ENCODE measurements at regions of chr3 and their contacts with region 1.

Region 1: DNA sequence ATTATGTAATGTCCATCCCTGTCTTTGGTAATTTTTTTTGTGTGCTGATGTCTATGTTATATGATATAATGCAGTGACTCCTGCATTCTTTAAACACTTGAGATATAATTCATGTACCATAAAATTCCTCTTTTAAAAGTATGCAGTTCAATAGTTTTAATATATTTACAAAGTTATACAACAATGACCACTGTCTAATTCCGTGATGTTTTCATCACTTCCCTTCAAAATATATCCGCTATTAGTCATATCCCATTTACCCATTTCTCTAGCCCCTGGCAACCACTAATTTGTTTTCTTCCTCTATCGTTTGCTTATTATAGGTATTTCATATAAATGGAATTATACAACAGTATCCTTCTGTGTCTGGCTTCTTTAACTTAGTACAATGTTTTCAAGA is 64.9 kb upstream of the SUCLG2 start:
- DNase-seq: no peak
- ATAC-seq: no peak
- H3K4me3 ChIP-seq: no peak overlapping the region
- H3K4me3 Mint-ChIP-seq: no peak overlapping the region
- H3K27ac ChIP-seq: no peak overlapping the region
- H3K27ac Mint-ChIP-seq: no peak overlapping the region
- H3K4me1 ChIP-seq: no peaks in the 10 kb centered on the region
- H3K4me1 Mint-ChIP-seq: peaks cover 4% of the 10 kb centered on the region
- H3K27me3 ChIP-seq: no peaks in the 10 kb centered on the region
- H3K27me3 Mint-ChIP-seq: no peaks in the 10 kb centered on the region
- CTCF ChIP-seq: no peak

Region 2: DNA sequence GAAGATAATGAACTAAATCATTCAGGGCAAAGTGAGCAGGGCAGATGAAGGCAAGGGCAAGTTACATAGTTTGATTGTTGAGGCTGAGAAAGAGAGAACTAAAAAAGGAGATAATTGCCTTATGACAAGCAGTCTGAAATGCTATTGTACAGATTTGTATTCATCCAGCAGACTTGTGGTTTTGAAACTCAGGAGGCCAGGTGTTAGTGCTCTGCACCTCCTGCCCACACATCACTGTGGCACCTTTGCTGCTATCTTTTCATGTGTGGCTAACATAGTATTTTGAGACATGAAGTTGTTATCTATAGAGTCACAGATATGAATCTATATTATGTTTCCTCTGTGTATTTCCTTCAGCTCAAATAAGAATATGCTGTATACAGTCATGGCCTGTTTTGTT is 40.7 kb before region 1 on chr3:
- CTCF ChIA-PET with region 1: no interaction called
- POLR2A ChIA-PET with region 1: no interaction called
- intact Hi-C with region 1: loop called in 1 of 2 experiments (anchors 5 kb)
- DNase-seq: peak in 2 of 9 experiments; percentile 25 to 40
- ATAC-seq: peak; percentile 42
- H3K4me3 ChIP-seq: no peak overlapping the region
- H3K4me3 Mint-ChIP-seq: peak overlapping the region; percentile 0
- H3K27ac ChIP-seq: peak overlapping the region in 1 of 2 experiments; percentile 18
- H3K27ac Mint-ChIP-seq: peak overlapping the region; percentile 62
- H3K4me1 ChIP-seq: peaks cover 26% of the 10 kb centered on the region
- H3K4me1 Mint-ChIP-seq: peaks cover 40% of the 10 kb centered on the region
- H3K27me3 ChIP-seq: no peaks in the 10 kb centered on the region
- H3K27me3 Mint-ChIP-seq: no peaks in the 10 kb centered on the region
- CTCF ChIP-seq: no peak

Region 3: GRCh38 chr3:67704322-67704721 is 15.0 kb before region 1 on chr3:
- CTCF ChIA-PET with region 1: no interaction called
- POLR2A ChIA-PET with region 1: no interaction called
- intact Hi-C with region 1: loop called in 1 of 2 experiments (anchors 2 kb)
- DNase-seq: peak in 2 of 9 experiments; percentile 25 to 43
- ATAC-seq: no peak
- H3K4me3 ChIP-seq: no peak overlapping the region
- H3K4me3 Mint-ChIP-seq: no peak overlapping the region
- H3K27ac ChIP-seq: no peak overlapping the region
- H3K27ac Mint-ChIP-seq: no peak overlapping the region
- H3K4me1 ChIP-seq: no peaks in the 10 kb centered on the region
- H3K4me1 Mint-ChIP-seq: peaks cover 14% of the 10 kb centered on the region
- H3K27me3 ChIP-seq: no peaks in the 10 kb centered on the region
- H3K27me3 Mint-ChIP-seq: no peaks in the 10 kb centered on the region
- CTCF ChIP-seq: no peak

Measured in CD8-positive, alpha-beta T cell (primary cell).